ENCODE measurements at regions of chr1 and their contacts with region 1.

Region 1: GRCh38 chr1:179251675-179252074 is 22.2 kb upstream of the ABL2 start:
- H3K4me3 ChIP-seq: no peak overlapping the region
- H3K27ac ChIP-seq: no peak overlapping the region
- H3K4me1 ChIP-seq: no peaks in the 10 kb centered on the region
- CTCF ChIP-seq: peak; percentile 41; the same call in 1 of the 2 replicates

Region 2: GRCh38 chr1:179369751-179370341 is 118.2 kb after region 1 on chr1:
- CTCF ChIA-PET with region 1: interaction called, 34 read pairs
- POLR2A ChIA-PET with region 1: no interaction called
- H3K4me3 ChIP-seq: no peak overlapping the region
- H3K27ac ChIP-seq: no peak overlapping the region
- H3K4me1 ChIP-seq: no peaks in the 10 kb centered on the region
- CTCF ChIP-seq: no peak

Measured in HEK293 (cell line).